ENCODE measurements at regions of chr3 and their contacts with region 1.

Region 1: GRCh38 chr3:129627429-129628168 is 21.1 kb upstream of the PLXND1 start:
- DNase-seq: peak; percentile 83 to 91 (median 90)
- H3K4me3 ChIP-seq: peak overlapping the region; percentile 51 to 81 (median 71)
- H3K27ac ChIP-seq: no peak overlapping the region
- H3K4me1 ChIP-seq: peaks cover 0 to 44% (median 28%) of the 10 kb centered on the region in 4 experiments
- H3K27me3 ChIP-seq: no peaks in the 10 kb centered on the region

Region 2: GRCh38 chr3:129352650-129353588 is 274.7 kb before region 1 on chr3:
- CTCF ChIA-PET with region 1: no interaction called
- POLR2A ChIA-PET with region 1: no interaction called
- DNase-seq: peak in 1 of 3 donors; percentile 33
- H3K4me3 ChIP-seq: no peak overlapping the region
- H3K27ac ChIP-seq: no peak overlapping the region
- H3K4me1 ChIP-seq: peaks cover 0 to 8% (median 3%) of the 10 kb centered on the region in 4 experiments
- H3K27me3 ChIP-seq: no peaks in the 10 kb centered on the region

Region 3: DNA sequence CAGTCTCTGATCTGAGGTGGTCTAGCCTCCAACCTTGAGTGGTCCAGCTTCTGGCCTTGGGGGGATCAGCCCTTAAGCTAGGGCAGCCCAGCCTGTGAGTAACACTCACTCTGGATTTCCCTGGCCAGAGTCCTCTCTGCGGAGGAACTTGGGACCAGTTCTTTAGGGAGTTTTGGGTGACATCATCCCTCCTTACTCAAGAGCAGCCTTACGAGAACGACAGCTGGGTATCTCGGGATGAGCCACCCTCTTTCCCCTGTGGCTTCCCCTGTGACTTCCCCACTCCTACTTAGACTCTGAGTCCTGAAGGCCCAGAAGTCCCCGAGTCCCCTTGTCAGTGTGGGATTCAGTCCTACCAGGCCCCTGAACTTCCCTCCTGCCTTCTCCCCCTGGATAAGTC is 10.9 kb before region 1 on chr3:
- CTCF ChIA-PET with region 1: interaction called, 19 read pairs
- POLR2A ChIA-PET with region 1: no interaction called
- DNase-seq: no peak
- H3K4me3 ChIP-seq: no peak overlapping the region
- H3K27ac ChIP-seq: no peak overlapping the region
- H3K4me1 ChIP-seq: peaks cover 0 to 67% (median 57%) of the 10 kb centered on the region in 4 experiments
- H3K27me3 ChIP-seq: no peaks in the 10 kb centered on the region

Region 4: DNA sequence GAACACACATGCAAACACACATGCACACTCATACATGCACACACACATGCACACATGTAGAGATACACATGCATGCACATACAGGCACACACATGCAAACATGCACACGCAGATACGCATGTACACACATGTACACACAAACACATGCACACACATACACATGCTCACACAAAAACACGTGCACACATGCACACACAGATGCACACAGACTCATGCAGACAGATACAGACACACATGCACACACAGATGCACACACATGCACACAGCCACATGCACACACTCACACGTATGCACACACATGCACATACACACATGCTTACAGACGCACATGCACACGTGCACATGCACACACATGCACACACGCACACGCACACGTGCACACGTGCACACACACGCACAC is 416.8 kb after region 1 on chr3:
- CTCF ChIA-PET with region 1: no interaction called
- POLR2A ChIA-PET with region 1: no interaction called
- DNase-seq: peak in 1 of 3 donors; percentile 4
- H3K4me3 ChIP-seq: no peak overlapping the region
- H3K27ac ChIP-seq: no peak overlapping the region
- H3K4me1 ChIP-seq: peaks cover 2 to 21% (median 10%) of the 10 kb centered on the region in 4 experiments
- H3K27me3 ChIP-seq: no peaks in the 10 kb centered on the region

Measured in common myeloid progenitor, CD34-positive (primary cell).